ENCODE measurements at regions of chr15 and their contacts with region 1.

Region 1: GRCh38 chr15:63481105-63481810 is 23.1 kb upstream of the USP3 start:
- DNase-seq: no peak
- ATAC-seq: no peak
- H3K4me3 ChIP-seq: no peak overlapping the region
- H3K4me3 Mint-ChIP-seq: peak overlapping the region in 1 of 3 donors; percentile 75
- H3K27ac ChIP-seq: peak overlapping the region; percentile 97
- H3K27ac Mint-ChIP-seq: peak overlapping the region; percentile 98 to 99
- H3K4me1 ChIP-seq: peaks cover 59 to 73% of the 10 kb centered on the region in 2 experiments
- H3K4me1 Mint-ChIP-seq: peaks cover 86 to 91% (median 87%) of the 10 kb centered on the region in 3 donors
- H3K27me3 ChIP-seq: no peaks in the 10 kb centered on the region
- H3K27me3 Mint-ChIP-seq: no peaks in the 10 kb centered on the region

Region 2: DNA sequence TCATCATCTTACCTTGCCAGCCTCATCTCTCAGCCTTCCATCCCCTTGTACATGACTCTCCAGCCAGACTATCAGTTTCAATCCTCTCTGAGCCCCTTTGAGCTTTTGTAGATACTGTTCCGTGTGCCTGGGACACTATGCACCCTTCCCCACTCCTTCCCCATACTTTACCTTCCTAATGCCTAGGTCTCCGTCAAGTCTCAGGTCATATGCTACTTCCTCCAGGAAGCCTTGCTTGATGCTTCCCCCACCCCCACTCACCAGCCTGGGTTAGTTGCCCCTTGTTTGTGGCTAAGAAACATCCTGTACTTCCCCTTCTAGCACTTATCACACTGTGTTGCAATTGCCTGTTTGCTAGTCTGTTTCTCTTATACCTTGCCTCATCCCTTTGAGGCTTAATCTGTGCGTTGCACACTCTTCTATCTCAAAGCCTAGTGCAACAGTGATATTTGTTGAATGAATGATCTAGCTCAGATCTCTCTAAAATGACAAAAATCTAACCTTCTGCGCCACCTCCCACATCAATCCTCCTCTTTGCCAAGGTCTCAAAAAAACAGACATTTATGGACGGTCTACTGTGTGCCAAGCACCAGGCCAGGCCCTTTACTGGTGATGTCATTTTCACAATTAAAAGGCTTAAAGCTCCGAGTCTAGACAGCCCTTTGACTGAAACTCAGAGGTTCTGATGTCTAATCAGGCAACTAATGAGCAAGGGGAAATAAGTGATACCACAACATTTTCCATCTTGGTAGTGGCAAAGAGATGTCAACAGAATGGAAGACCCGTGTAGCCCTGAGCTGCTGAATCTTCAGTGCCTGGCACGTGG is 16.6 kb after region 1 on chr15:
- CTCF ChIA-PET with region 1: interaction called in 1 of 2 experiments, 29 read pairs
- POLR2A ChIA-PET with region 1: interaction called, 7 to 11 read pairs
- DNase-seq: peak; percentile 59 to 90 (median 79)
- ATAC-seq: peak; percentile 77 to 85 (median 82)
- H3K4me3 ChIP-seq: peak overlapping the region; percentile 27 to 36
- H3K4me3 Mint-ChIP-seq: no peak overlapping the region
- H3K27ac ChIP-seq: peak overlapping the region; percentile 99
- H3K27ac Mint-ChIP-seq: no peak overlapping the region
- H3K4me1 ChIP-seq: peaks cover 69 to 88% of the 10 kb centered on the region in 2 experiments
- H3K4me1 Mint-ChIP-seq: peaks cover 50 to 82% (median 58%) of the 10 kb centered on the region in 3 donors
- H3K27me3 ChIP-seq: no peaks in the 10 kb centered on the region
- H3K27me3 Mint-ChIP-seq: no peaks in the 10 kb centered on the region